Cardiac septum (tissue), 1 donor: ENCODE measurements at regions of chrX and their contacts with region 1.

Region 1: GRCh38 chrX:105190252-105190853 is 30.1 kb downstream of the TEX13A start:
- DNase-seq: no peak

Region 2: GRCh38 chrX:105101378-105101777 is 89.0 kb before region 1 on chrX:
- intact Hi-C with region 1: no loop called
- DNase-seq: no peak

Region 3: DNA sequence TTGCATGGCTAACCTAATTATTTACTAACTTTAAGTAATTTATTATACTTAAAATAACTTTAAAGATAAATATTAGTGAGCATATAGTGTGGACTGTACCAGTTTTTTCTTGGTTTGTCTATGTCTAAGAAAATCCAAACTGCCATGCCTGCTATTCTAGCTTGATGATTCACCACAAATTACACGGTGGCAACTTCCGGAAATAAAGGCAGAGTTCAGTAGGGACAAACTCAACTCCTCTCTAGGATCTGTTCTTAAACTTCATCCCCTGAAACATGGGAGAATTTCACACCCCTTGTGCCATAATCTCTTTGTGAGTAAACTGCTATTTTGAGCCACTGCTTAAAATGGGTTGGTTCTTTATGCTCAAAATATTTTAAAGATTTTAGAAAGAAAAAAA is 418.4 kb after region 1 on chrX:
- intact Hi-C with region 1: no loop called
- DNase-seq: no peak

Region 4: GRCh38 chrX:105701084-105702055 is 511.0 kb after region 1 on chrX:
- intact Hi-C with region 1: loop called (anchors 10 kb)
- DNase-seq: no peak